K562 (cell line): ENCODE measurements at regions of chr13 and their contacts with region 1.

Region 1: GRCh38 chr13:27826379-27827353 is 34.4 kb downstream of the GSX1 start:
- DNase-seq: peak; percentile 68 to 78 (median 70)
- ATAC-seq: peak; percentile 93
- H3K4me3 ChIP-seq: no peak overlapping the region
- H3K27ac ChIP-seq: no peak overlapping the region
- H3K4me1 ChIP-seq: peaks cover 0 to 8% of the 10 kb centered on the region in 2 experiments; a peak in 2 of 5 replicates
- H3K27me3 ChIP-seq: no peaks in the 10 kb centered on the region; a peak in 1 of 5 replicates
- CTCF ChIP-seq: peak; percentile 79 to 83 (median 83)
- EP300 ChIP-seq: no peak
- POLR2A ChIP-seq: no peak
- RAD21 ChIP-seq: peak; percentile 80 to 85

Region 2: GRCh38 chr13:26929971-26930730 is 896.5 kb before region 1 on chr13:
- CTCF ChIA-PET with region 1: no interaction called
- POLR2A ChIA-PET with region 1: no interaction called
- in situ Hi-C with region 1: loop called (anchors 25 kb)
- intact Hi-C with region 1: no loop called
- DNase-seq: peak; percentile 71 to 77 (median 72)
- ATAC-seq: peak; percentile 95
- H3K4me3 ChIP-seq: no peak overlapping the region
- H3K27ac ChIP-seq: no peak overlapping the region
- H3K4me1 ChIP-seq: no peaks in the 10 kb centered on the region; a peak in 1 of 5 replicates
- H3K27me3 ChIP-seq: peaks cover 0 to 15% of the 10 kb centered on the region in 2 experiments
- CTCF ChIP-seq: peak; percentile 67 to 84 (median 81)
- EP300 ChIP-seq: no peak
- POLR2A ChIP-seq: no peak
- RAD21 ChIP-seq: peak; percentile 31 to 64

Region 3: DNA sequence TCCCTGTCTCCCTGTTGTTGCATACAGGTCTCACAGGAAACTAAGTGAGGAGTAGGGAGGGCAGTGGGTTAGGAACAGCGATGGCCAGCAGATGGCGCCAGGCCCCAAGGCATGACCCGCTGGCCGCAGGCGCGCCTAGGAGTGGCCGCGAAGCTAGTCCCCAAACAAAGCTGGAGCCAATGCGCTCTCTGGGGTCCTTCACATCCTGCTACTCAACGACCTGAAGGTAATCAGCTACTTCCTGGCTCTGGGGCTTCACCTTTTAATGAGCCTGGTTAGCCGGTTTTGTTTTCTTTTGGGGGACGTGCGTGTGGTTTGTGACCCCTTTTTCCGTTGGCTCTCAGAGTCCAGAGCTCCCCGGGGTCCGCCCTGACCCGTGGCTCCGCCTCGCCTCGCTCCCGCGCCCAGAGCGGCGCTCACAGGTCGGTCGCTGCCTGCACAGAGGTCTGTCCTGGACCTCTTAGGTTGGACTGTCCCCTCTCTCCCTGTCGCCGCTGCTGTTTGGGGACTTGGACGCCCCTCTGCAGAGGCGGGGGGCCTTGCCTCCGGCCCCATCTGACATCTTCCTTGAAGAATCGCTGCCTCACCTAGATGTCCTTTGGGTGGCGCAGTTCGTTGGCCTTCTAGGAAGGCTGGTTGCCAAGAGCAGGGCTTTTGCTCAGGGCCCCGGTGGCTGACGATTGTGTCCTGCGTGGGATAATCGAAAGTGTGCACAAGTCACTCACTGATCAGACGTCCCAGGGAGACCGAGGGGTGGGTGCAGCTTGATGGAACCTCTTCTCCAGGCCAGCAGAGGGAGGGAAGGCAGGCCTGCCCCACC is 464.4 kb before region 1 on chr13:
- CTCF ChIA-PET with region 1: interaction called, 18 read pairs
- POLR2A ChIA-PET with region 1: interaction called, 3 read pairs
- in situ Hi-C with region 1: no loop called
- intact Hi-C with region 1: loop called (anchors 1 kb)
- DNase-seq: peak; percentile 82 to 83 (median 82)
- ATAC-seq: peak; percentile 97
- H3K4me3 ChIP-seq: peak overlapping the region; percentile 30
- H3K27ac ChIP-seq: no peak overlapping the region
- H3K4me1 ChIP-seq: peaks cover 0 to 7% of the 10 kb centered on the region in 2 experiments; a peak in 2 of 5 replicates
- H3K27me3 ChIP-seq: peaks cover 7 to 19% of the 10 kb centered on the region in 2 experiments; a peak in 4 of 5 replicates
- CTCF ChIP-seq: peak; percentile 86 to 90 (median 90)
- EP300 ChIP-seq: no peak
- POLR2A ChIP-seq: no peak
- RAD21 ChIP-seq: peak; percentile 72 to 86

Region 4: GRCh38 chr13:27379694-27380641 is 446.7 kb before region 1 on chr13:
- CTCF ChIA-PET with region 1: interaction called, 16 read pairs
- POLR2A ChIA-PET with region 1: no interaction called
- in situ Hi-C with region 1: loop called (anchors 5 kb)
- intact Hi-C with region 1: loop called (anchors 1 kb)
- DNase-seq: peak; percentile 57 to 66 (median 62)
- ATAC-seq: peak; percentile 82
- H3K4me3 ChIP-seq: no peak overlapping the region
- H3K27ac ChIP-seq: no peak overlapping the region
- H3K4me1 ChIP-seq: no peaks in the 10 kb centered on the region; a peak in 1 of 5 replicates
- H3K27me3 ChIP-seq: peaks cover 0 to 8% of the 10 kb centered on the region in 2 experiments; a peak in 2 of 5 replicates
- CTCF ChIP-seq: peak; percentile 58 to 75 (median 69)
- EP300 ChIP-seq: no peak
- POLR2A ChIP-seq: no peak
- RAD21 ChIP-seq: peak; percentile 36 to 64

Region 5: GRCh38 chr13:27533155-27533643 is 293.5 kb before region 1 on chr13:
- CTCF ChIA-PET with region 1: interaction called, 3 read pairs
- POLR2A ChIA-PET with region 1: interaction called, 5 read pairs
- in situ Hi-C with region 1: no loop called
- intact Hi-C with region 1: loop called (anchors 2 kb)
- DNase-seq: peak; percentile 52 to 80 (median 64)
- ATAC-seq: peak; percentile 100
- H3K4me3 ChIP-seq: no peak overlapping the region
- H3K27ac ChIP-seq: no peak overlapping the region
- H3K4me1 ChIP-seq: peaks cover 0 to 10% of the 10 kb centered on the region in 2 experiments; a peak in 4 of 5 replicates
- H3K27me3 ChIP-seq: peaks cover 2 to 14% of the 10 kb centered on the region in 2 experiments; a peak in 4 of 5 replicates
- CTCF ChIP-seq: peak; percentile 90 to 99 (median 90)
- EP300 ChIP-seq: no peak
- POLR2A ChIP-seq: no peak
- RAD21 ChIP-seq: peak; percentile 78 to 85

Region 6: GRCh38 chr13:27770809-27771208 is 55.9 kb before region 1 on chr13:
- CTCF ChIA-PET with region 1: no interaction called
- POLR2A ChIA-PET with region 1: no interaction called
- in situ Hi-C with region 1: no loop called
- intact Hi-C with region 1: loop called (anchors 2 kb)
- DNase-seq: peak in 2 of 4 experiments; percentile 11 to 26
- ATAC-seq: peak; percentile 68
- H3K4me3 ChIP-seq: no peak overlapping the region
- H3K27ac ChIP-seq: no peak overlapping the region
- H3K4me1 ChIP-seq: no peaks in the 10 kb centered on the region
- H3K27me3 ChIP-seq: peaks cover 0 to 15% of the 10 kb centered on the region in 2 experiments; a peak in 1 of 5 replicates
- CTCF ChIP-seq: peak; percentile 32 to 45 (median 35); a peak in 3 of 6 replicates
- EP300 ChIP-seq: no peak
- POLR2A ChIP-seq: no peak
- RAD21 ChIP-seq: 0 out of 4 replicates have a peak, but pooled peaks of 1 of the 2 experiments have one; percentile 27

Region 7: GRCh38 chr13:27868641-27869435 is 42.2 kb after region 1 on chr13:
- CTCF ChIA-PET with region 1: no interaction called
- POLR2A ChIA-PET with region 1: no interaction called
- in situ Hi-C with region 1: no loop called
- intact Hi-C with region 1: no loop called
- DNase-seq: no peak
- ATAC-seq: no peak
- H3K4me3 ChIP-seq: no peak overlapping the region
- H3K27ac ChIP-seq: no peak overlapping the region
- H3K4me1 ChIP-seq: no peaks in the 10 kb centered on the region
- H3K27me3 ChIP-seq: no peaks in the 10 kb centered on the region
- CTCF ChIP-seq: peak; percentile 13 to 45 (median 24); a peak in 4 of 6 replicates
- EP300 ChIP-seq: no peak
- POLR2A ChIP-seq: no peak
- RAD21 ChIP-seq: no peak

Region 8: GRCh38 chr13:27980280-27980998 is 153.8 kb after region 1 on chr13:
- CTCF ChIA-PET with region 1: interaction called, 6 read pairs
- POLR2A ChIA-PET with region 1: no interaction called
- in situ Hi-C with region 1: no loop called
- intact Hi-C with region 1: loop called (anchors 5 kb)
- DNase-seq: no peak
- ATAC-seq: no peak
- H3K4me3 ChIP-seq: no peak overlapping the region
- H3K27ac ChIP-seq: no peak overlapping the region
- H3K4me1 ChIP-seq: 0 out of 5 replicates have a peak, but pooled peaks cover 0 to 3% of the 10 kb centered on the region in 2 experiments
- H3K27me3 ChIP-seq: peaks cover 3 to 39% of the 10 kb centered on the region in 2 experiments; a peak in 4 of 5 replicates
- CTCF ChIP-seq: no peak
- EP300 ChIP-seq: no peak
- POLR2A ChIP-seq: no peak
- RAD21 ChIP-seq: no peak

Region 9: GRCh38 chr13:29254626-29255370 is 1428.1 kb after region 1 on chr13:
- CTCF ChIA-PET with region 1: no interaction called
- POLR2A ChIA-PET with region 1: no interaction called
- in situ Hi-C with region 1: no loop called
- intact Hi-C with region 1: no loop called
- DNase-seq: no peak
- ATAC-seq: no peak
- H3K4me3 ChIP-seq: no peak overlapping the region
- H3K27ac ChIP-seq: no peak overlapping the region
- H3K4me1 ChIP-seq: no peaks in the 10 kb centered on the region
- H3K27me3 ChIP-seq: no peaks in the 10 kb centered on the region
- CTCF ChIP-seq: no peak
- EP300 ChIP-seq: no peak
- POLR2A ChIP-seq: no peak
- RAD21 ChIP-seq: no peak